ENCODE measurements at regions of chr10 and their contacts with region 1.

Region 1: GRCh38 chr10:22010973-22011408 is 7.5 kb upstream of the DNAJC1 start:
- DNase-seq: no peak
- ATAC-seq: no peak
- H3K4me3 ChIP-seq: no peak overlapping the region
- H3K27ac ChIP-seq: no peak overlapping the region
- H3K4me1 ChIP-seq: peaks cover 3% of the 10 kb centered on the region
- H3K27me3 ChIP-seq: no peaks in the 10 kb centered on the region
- CTCF ChIP-seq: peak; percentile 54

Region 2: DNA sequence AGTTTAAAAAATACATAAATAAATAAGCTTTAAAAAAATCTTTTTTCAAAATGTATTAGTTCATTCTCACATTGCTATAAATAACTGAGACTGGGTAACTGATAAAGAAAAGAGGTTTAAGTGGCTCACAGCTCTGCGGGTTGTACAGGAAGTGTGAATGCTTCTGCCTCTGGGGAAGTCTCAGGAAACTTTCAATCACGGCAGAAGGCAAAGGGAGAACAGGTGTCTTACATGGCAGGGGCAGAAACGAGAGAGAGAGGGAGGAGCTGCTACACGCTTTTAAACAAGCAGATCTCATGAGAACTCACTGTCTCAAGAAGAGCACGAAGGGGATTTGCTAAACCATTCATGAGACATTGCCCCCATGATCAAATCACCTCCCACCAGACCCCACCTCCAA is 122.0 kb before region 1 on chr10:
- intact Hi-C with region 1: no loop called
- DNase-seq: no peak
- ATAC-seq: no peak
- H3K4me3 ChIP-seq: no peak overlapping the region
- H3K27ac ChIP-seq: no peak overlapping the region
- H3K4me1 ChIP-seq: no peaks in the 10 kb centered on the region
- H3K27me3 ChIP-seq: no peaks in the 10 kb centered on the region
- CTCF ChIP-seq: no peak

Region 3: GRCh38 chr10:22228943-22229801 is 218.2 kb after region 1 on chr10:
- intact Hi-C with region 1: loop called (anchors 10 kb)
- DNase-seq: peak; percentile 91
- ATAC-seq: peak; percentile 99
- H3K4me3 ChIP-seq: peak overlapping the region; percentile 74
- H3K27ac ChIP-seq: peak overlapping the region; percentile 93
- H3K4me1 ChIP-seq: no peaks in the 10 kb centered on the region
- H3K27me3 ChIP-seq: no peaks in the 10 kb centered on the region
- CTCF ChIP-seq: no peak

Region 4: GRCh38 chr10:22251751-22252223 is 240.8 kb after region 1 on chr10:
- intact Hi-C with region 1: no loop called
- DNase-seq: peak; percentile 86
- ATAC-seq: peak; percentile 73
- H3K4me3 ChIP-seq: peak overlapping the region; percentile 72
- H3K27ac ChIP-seq: peak overlapping the region; percentile 98
- H3K4me1 ChIP-seq: no peaks in the 10 kb centered on the region
- H3K27me3 ChIP-seq: no peaks in the 10 kb centered on the region
- CTCF ChIP-seq: no peak